ENCODE measurements at regions of chr12 and their contacts with region 1.

Region 1: GRCh38 chr12:105053116-105053572 is 31.1 kb downstream of the ALDH1L2 start:
- DNase-seq: peak; percentile 54 to 83 (median 72)
- ATAC-seq: peak; percentile 89
- H3K4me3 ChIP-seq: no peak overlapping the region
- H3K4me3 Mint-ChIP-seq: no peak overlapping the region
- H3K27ac ChIP-seq: no peak overlapping the region
- H3K27ac Mint-ChIP-seq: no peak overlapping the region
- H3K4me1 ChIP-seq: no peaks in the 10 kb centered on the region
- H3K4me1 Mint-ChIP-seq: no peaks in the 10 kb centered on the region
- H3K27me3 ChIP-seq: no peaks in the 10 kb centered on the region
- H3K27me3 Mint-ChIP-seq: peaks cover 2% of the 10 kb centered on the region
- CTCF ChIP-seq: peak; percentile 96

Region 2: GRCh38 chr12:104201238-104202001 is 851.7 kb before region 1 on chr12:
- CTCF ChIA-PET with region 1: interaction called, 11 read pairs
- POLR2A ChIA-PET with region 1: no interaction called
- intact Hi-C with region 1: loop called (anchors 1 kb)
- DNase-seq: peak; percentile 7 to 80 (median 39)
- ATAC-seq: peak; percentile 57
- H3K4me3 ChIP-seq: no peak overlapping the region
- H3K4me3 Mint-ChIP-seq: no peak overlapping the region
- H3K27ac ChIP-seq: no peak overlapping the region
- H3K27ac Mint-ChIP-seq: no peak overlapping the region
- H3K4me1 ChIP-seq: no peaks in the 10 kb centered on the region
- H3K4me1 Mint-ChIP-seq: peaks cover 2% of the 10 kb centered on the region
- H3K27me3 ChIP-seq: no peaks in the 10 kb centered on the region
- H3K27me3 Mint-ChIP-seq: peaks cover 15% of the 10 kb centered on the region
- CTCF ChIP-seq: peak; percentile 87

Region 3: GRCh38 chr12:104215638-104216297 is 837.4 kb before region 1 on chr12 and contains the start of gene TXNRD1:
- CTCF ChIA-PET with region 1: interaction called, 4 read pairs
- POLR2A ChIA-PET with region 1: no interaction called
- intact Hi-C with region 1: loop called (anchors 2 to 5 kb)
- DNase-seq: peak; percentile 67 to 91 (median 83)
- ATAC-seq: peak; percentile 97
- H3K4me3 ChIP-seq: peak within 1 kb of the TSS; percentile 63 to 69
- H3K4me3 Mint-ChIP-seq: peak within 1 kb of the TSS; percentile 83
- H3K27ac ChIP-seq: peak within 1 kb of the TSS in 1 of 2 experiments; percentile 26
- H3K27ac Mint-ChIP-seq: peak within 1 kb of the TSS; percentile 64
- H3K4me1 ChIP-seq: peaks cover 9% of the 10 kb centered on the region
- H3K4me1 Mint-ChIP-seq: peaks cover 18% of the 10 kb centered on the region
- H3K27me3 ChIP-seq: no peaks in the 10 kb centered on the region
- H3K27me3 Mint-ChIP-seq: peaks cover 3% of the 10 kb centered on the region
- CTCF ChIP-seq: peak; percentile 80
- total RNA-seq, gene TXNRD1: 25.1 to 33.1 TPM

Region 4: DNA sequence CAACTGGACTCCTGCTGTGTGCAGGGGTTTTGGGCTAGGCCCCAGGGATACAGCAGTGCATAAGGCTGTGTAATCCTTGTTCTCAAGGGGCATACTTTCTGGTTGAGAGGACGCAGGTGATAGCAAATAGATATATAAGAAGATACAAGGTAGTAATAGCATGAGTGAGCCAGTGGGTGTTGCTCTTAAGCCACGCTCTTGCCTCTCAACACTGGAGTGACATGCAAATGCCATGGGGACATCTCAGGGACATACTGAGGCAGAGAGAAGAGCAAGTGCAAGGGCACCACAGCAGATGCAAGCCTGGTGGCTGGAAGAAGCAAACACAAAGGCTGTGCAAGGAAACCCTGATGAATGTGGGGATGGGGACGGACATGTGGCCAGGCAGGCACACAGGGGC is 373.1 kb before region 1 on chr12:
- CTCF ChIA-PET with region 1: no interaction called
- POLR2A ChIA-PET with region 1: no interaction called
- intact Hi-C with region 1: loop called (anchors 1 kb)
- DNase-seq: peak in 5 of 9 experiments; percentile 22 to 70 (median 58)
- ATAC-seq: peak; percentile 48
- H3K4me3 ChIP-seq: no peak overlapping the region
- H3K4me3 Mint-ChIP-seq: no peak overlapping the region
- H3K27ac ChIP-seq: no peak overlapping the region
- H3K27ac Mint-ChIP-seq: no peak overlapping the region
- H3K4me1 ChIP-seq: peaks cover 34% of the 10 kb centered on the region
- H3K4me1 Mint-ChIP-seq: peaks cover 56% of the 10 kb centered on the region
- H3K27me3 ChIP-seq: no peaks in the 10 kb centered on the region
- H3K27me3 Mint-ChIP-seq: no peaks in the 10 kb centered on the region
- CTCF ChIP-seq: peak; percentile 46

Region 5: DNA sequence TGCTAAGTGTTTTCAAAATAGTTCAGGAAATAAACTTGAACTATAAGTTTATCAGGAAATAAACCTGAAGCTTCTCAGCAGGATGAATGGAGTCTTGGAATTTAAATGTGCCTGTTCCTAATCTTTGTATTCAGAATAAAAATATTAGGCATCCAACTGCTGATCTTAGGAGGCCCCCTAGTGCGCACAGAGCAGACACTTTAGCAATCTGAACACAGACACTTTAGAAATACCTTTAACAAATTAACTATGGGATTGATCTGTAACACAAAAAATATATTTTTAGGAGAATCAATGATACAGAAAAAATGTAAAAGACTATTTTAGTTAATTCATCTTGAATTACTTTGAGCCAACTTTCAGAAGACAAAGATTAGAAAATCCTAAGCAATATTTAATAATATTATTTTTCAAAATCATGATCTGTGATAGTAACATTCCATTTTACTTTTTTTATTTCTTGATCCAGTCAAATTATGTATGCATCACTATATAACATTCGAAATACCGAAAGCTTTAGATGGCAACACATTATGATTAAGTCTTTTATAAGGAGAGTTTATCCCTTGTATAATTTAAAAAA is 175.9 kb before region 1 on chr12:
- CTCF ChIA-PET with region 1: no interaction called
- POLR2A ChIA-PET with region 1: no interaction called
- intact Hi-C with region 1: loop called (anchors 1 to 5 kb)
- DNase-seq: peak; percentile 3 to 60 (median 31)
- ATAC-seq: no peak
- H3K4me3 ChIP-seq: no peak overlapping the region
- H3K4me3 Mint-ChIP-seq: no peak overlapping the region
- H3K27ac ChIP-seq: no peak overlapping the region
- H3K27ac Mint-ChIP-seq: no peak overlapping the region
- H3K4me1 ChIP-seq: no peaks in the 10 kb centered on the region
- H3K4me1 Mint-ChIP-seq: no peaks in the 10 kb centered on the region
- H3K27me3 ChIP-seq: no peaks in the 10 kb centered on the region
- H3K27me3 Mint-ChIP-seq: no peaks in the 10 kb centered on the region
- CTCF ChIP-seq: peak; percentile 83

Region 6: DNA sequence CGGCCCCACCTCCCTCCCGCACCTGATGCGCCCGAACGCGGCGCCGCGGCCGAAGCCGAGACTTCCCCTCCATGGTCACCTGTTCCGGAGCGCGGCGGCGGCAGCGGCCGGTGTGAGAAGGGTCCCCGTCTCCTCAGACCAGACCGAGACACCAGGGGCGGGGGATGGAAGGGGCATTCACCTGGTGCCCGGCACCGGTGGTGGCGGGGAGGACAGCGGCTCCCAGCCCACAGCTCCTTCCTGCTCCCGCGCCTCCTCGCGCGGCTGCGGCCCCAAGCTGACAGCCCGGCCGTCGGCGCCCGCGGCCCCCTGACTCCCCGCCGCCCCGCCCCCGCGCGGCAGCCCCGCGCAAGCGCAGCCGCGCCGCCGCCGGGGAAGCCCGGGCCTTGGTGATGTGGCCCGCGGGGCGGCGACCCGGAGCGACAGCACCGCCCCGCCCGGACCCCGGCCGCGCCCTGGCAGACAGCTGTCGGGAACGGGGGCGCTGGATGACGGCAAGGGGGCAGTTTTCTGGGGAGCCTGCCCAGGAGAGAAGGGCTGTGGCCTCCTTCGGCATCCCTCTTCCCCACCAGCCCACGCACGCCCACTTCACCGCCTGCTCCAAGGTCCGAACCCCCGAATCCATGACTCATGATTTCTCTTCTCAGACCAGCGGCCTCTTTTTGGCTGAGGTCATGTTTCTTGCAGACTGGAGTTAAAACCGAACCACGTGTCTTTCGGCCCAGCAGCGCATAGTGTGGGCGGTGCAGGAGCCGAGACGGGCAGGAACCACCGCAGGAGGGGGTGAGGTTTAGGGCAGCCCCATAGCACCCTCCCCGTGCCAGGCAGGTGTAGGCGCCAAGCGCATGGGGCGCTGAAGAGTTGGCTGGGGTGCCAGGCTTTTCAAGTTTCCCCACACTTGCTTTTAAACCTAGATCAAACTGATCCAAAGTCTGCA is 94.9 kb before region 1 on chr12 and contains the start of gene SLC41A2:
- CTCF ChIA-PET with region 1: interaction called, 8 read pairs
- POLR2A ChIA-PET with region 1: no interaction called
- intact Hi-C with region 1: loop called (anchors 1 kb)
- DNase-seq: peak; percentile 52 to 90 (median 76)
- ATAC-seq: peak; percentile 90
- H3K4me3 ChIP-seq: peak within 1 kb of the TSS; percentile 61 to 97
- H3K4me3 Mint-ChIP-seq: peak within 1 kb of the TSS; percentile 94
- H3K27ac ChIP-seq: peak within 1 kb of the TSS; percentile 40 to 42
- H3K27ac Mint-ChIP-seq: peak within 1 kb of the TSS; percentile 85
- H3K4me1 ChIP-seq: peaks cover 13% of the 10 kb centered on the region
- H3K4me1 Mint-ChIP-seq: peaks cover 19% of the 10 kb centered on the region
- H3K27me3 ChIP-seq: no peaks in the 10 kb centered on the region
- H3K27me3 Mint-ChIP-seq: peaks cover 17% of the 10 kb centered on the region
- CTCF ChIP-seq: no peak
- total RNA-seq, gene SLC41A2: 3.4 to 4.2 TPM

Region 7: DNA sequence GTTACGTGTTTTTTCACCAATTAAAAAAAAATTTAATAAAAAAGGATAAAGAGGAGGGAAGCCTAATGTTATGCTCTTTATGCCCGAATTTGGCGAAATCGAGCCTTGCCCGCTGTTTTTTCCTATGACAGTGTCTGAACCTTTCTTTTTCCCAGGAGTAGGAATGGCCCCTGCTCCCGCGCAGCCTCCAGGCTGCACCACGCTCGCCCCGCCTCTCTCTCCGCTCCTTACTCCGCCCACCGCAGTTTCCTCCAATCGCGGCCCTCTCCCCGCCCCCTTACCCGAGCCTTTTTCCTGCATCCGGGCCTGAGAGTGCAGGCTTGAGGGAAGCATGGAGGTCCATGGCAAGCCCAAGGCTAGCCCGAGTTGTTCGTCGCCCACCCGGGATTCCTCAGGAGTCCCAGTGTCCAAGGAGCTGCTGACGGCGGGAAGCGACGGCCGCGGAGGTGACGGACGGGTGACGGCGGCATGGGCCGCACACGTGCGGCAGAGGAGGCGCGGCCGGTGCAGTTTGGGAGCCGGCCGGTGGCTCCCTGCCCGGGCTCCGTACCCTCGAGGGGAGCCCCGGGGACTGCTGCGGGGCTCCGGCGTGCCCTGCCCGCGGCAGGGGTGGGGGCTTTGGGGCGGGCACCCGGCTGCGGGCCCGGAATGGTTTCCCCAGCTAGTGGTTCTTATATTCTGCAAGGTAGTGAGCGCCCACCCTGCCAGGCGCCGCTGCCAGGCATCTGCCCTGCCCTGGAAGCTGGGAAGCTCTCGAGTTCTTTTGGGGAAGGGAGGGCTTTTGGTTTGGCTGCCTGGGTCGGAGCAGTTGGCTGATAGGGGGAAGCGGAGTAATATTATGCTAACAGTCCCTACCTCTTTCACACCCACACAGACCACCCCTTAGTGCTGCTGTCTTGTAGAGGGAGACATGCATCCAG is 66.9 kb before region 1 on chr12 and contains the start of gene NOPCHAP1:
- CTCF ChIA-PET with region 1: no interaction called
- POLR2A ChIA-PET with region 1: no interaction called
- intact Hi-C with region 1: loop called in 1 of 2 experiments (anchors 2 kb)
- DNase-seq: peak; percentile 66 to 89 (median 82)
- ATAC-seq: peak; percentile 98
- H3K4me3 ChIP-seq: peak within 1 kb of the TSS; percentile 70 to 93
- H3K4me3 Mint-ChIP-seq: peak within 1 kb of the TSS; percentile 90
- H3K27ac ChIP-seq: peak within 1 kb of the TSS; percentile 33 to 55
- H3K27ac Mint-ChIP-seq: peak within 1 kb of the TSS; percentile 80
- H3K4me1 ChIP-seq: peaks cover 16% of the 10 kb centered on the region
- H3K4me1 Mint-ChIP-seq: peaks cover 35% of the 10 kb centered on the region
- H3K27me3 ChIP-seq: no peaks in the 10 kb centered on the region
- H3K27me3 Mint-ChIP-seq: no peaks in the 10 kb centered on the region
- CTCF ChIP-seq: no peak
- total RNA-seq, gene NOPCHAP1: 13.2 to 16.5 TPM

Measured in CD8-positive, alpha-beta T cell (primary cell).